AG04449 (cell line): ENCODE measurements at regions of chr6 and their contacts with region 1.

Region 1: GRCh38 chr6:31952140-31952805 is 6.4 kb downstream of the CFB start:
- DNase-seq: no peak
- H3K4me3 ChIP-seq: no peak overlapping the region
- CTCF ChIP-seq: peak; percentile 86

Region 2: DNA sequence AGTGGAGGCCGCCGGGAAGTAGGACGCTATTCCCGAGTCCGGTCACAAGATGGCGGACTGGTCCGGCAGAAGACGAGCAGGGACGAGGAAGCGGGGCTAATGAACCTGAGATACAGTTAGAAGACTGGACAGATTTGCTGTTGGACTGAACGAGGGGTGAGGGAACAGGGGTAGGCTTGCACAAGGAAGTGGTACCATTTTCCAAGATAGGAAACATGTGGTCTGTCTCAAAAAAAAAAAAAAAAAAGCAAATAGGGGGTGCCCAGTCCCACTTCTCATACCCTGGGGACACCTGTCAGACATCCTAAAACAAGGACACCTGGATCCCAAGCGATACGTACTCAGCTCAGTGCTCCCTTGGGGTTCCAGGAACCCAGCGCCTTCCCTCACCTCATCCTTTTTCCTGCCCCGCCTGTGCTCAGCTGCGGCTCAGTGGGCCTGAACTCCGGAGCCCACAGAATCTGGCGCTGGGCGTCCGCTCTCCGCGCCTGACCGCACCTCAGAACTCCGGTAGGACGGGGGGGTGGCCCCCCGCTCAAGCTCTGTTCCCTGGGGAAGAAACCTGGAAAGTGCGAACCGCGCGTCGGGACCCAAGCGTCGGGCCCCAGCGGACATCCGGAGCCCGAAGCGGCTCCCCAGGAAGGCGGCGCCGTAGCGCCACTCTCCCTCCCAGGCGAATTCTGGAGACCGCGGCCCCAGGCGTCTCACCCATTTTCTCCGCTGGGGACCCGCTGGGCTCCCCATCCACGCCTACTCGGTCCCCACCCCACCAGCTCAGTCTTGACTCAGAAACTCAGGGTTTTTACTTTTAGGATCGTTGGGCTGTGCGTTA is 271.2 kb before region 1 on chr6 and contains the start of gene LY6G5C:
- CTCF ChIA-PET with region 1: interaction called, 28 read pairs
- POLR2A ChIA-PET with region 1: no interaction called
- DNase-seq: peak; percentile 64
- H3K4me3 ChIP-seq: peak within 1 kb of the TSS; percentile 58
- CTCF ChIP-seq: peak; percentile 78

Region 3: GRCh38 chr6:31882344-31882743 is 69.9 kb before region 1 on chr6:
- CTCF ChIA-PET with region 1: interaction called, 26 read pairs
- POLR2A ChIA-PET with region 1: no interaction called
- DNase-seq: no peak
- H3K4me3 ChIP-seq: no peak overlapping the region
- CTCF ChIP-seq: no peak

Region 4: DNA sequence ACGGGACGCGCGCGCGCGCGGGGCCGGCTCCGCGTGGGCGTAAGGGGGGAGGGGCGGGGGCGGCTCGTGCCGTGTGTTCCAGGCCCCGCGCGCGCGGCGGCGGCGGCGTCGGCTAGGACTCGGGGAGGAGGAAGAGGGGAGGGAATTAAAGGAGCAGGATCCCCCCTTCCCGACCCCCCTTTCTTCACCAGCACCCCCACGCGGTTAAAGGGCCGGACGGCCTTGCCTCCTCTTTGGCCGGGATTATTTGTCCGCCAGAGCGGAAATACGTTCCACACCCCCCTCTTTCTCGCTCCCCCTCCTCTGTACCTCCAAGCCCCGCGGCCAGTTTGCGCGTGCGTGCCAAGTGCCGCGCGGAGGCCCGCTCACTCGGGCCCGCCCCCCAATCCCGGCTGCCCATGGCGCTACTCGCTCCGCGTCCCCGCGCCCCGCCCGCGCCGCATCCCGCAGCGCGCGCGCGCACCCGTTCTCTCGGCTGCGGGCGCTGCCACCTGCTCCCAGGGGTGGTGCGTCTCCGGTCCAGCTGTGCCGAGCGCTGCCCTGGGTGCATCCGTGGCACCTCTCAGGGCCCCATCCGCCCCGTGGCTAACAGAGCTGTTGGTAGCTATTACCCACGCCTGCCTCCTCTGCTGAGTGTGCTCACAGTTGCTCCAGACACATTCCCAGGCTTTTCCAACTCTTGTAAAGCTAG is 50.2 kb before region 1 on chr6 and contains the start of gene ZBTB12:
- CTCF ChIA-PET with region 1: interaction called, 35 read pairs
- POLR2A ChIA-PET with region 1: interaction called, 4 read pairs
- DNase-seq: peak; percentile 80
- H3K4me3 ChIP-seq: peak within 1 kb of the TSS; percentile 73
- CTCF ChIP-seq: no peak

Region 5: DNA sequence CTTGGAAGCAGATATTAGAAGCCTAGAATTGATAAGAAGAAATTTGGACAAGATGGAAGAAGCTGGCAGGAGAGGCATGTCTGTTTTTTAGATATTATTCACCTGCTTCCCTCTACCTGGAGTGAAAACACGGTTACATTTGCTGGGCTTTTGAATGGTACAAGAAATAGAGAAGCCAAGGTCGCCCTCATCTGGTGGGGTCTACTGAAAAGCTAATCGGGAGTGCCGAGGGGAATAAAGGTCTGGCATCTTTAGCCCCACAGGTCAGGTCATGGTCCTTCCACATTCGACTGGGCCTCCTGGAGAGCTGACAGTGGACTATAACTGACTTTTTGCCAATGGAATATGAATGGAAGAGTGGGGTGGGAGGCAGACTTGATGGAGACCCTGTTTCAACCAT is 29.3 kb before region 1 on chr6:
- CTCF ChIA-PET with region 1: interaction called, 23 read pairs
- POLR2A ChIA-PET with region 1: interaction called, 4 read pairs
- DNase-seq: no peak
- H3K4me3 ChIP-seq: no peak overlapping the region
- CTCF ChIP-seq: no peak

Region 6: DNA sequence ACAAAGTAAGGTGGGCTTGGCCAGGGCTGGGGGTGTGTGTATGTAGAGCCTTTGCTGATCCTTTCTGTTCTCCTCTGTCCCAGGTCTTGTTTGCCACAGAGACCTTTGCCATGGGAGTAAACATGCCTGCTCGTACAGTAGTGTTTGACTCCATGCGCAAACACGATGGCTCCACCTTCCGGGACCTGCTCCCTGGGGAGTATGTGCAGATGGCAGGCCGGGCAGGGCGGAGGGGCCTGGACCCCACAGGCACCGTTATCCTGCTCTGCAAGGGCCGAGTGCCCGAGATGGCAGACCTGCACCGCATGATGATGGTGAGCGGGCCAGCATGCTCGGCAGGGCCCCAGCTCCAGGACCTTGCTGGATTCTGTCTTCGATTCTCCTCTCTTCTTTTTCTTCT is 13.4 kb after region 1 on chr6:
- CTCF ChIA-PET with region 1: interaction called, 30 read pairs
- POLR2A ChIA-PET with region 1: no interaction called
- DNase-seq: no peak
- H3K4me3 ChIP-seq: no peak overlapping the region
- CTCF ChIP-seq: no peak